ENCODE measurements at regions of chr20 and their contacts with region 1.

Region 1: DNA sequence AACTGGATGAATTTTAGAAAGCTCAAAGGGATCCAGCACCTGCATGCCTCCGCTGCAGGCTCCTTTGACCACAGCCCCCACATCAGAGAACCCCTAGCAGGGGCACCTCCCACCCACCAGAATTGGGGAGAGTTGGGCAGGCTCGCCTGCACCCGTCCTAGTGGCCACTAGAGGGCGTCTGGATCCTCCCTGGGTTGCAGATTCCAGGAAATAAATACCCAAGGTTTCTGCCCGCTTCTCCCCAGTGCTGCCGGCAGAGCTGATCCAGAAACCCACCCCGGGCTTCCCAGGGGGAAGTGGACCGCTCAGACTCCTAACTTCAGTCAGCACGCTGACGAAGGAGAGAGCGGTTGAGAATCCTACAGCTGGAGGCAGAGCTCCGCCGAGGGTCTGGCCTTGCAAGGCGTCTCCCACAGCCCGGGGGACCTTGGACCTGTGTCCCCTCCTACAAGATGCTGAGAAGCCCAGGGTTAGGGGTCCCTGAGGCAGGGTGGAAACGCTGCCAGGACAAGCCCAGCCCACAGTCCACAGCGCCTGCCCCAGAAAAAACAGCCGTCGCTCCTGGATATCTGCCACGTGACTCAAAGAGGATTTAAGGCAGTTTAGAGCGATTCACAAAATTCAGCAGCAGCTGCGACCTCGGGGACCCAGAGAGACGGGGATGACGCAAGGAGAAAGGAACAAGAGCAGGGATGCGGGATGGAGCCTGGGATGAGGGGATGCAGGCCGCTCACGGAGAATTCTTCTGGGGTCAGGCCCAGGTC is 32.6 kb upstream of the PHACTR3 start:
- DNase-seq: peak; percentile 72 to 85 (median 81)
- H3K4me3 ChIP-seq: peak overlapping the region; percentile 26
- H3K27ac ChIP-seq: peak overlapping the region; percentile 60 to 79
- H3K4me1 ChIP-seq: peaks cover 12% of the 10 kb centered on the region
- H3K27me3 ChIP-seq: no peaks in the 10 kb centered on the region
- CTCF ChIP-seq: peak; percentile 81 to 94 (median 82)
- EP300 ChIP-seq: no peak
- POLR2A ChIP-seq: no peak

Region 2: GRCh38 chr20:59751056-59751688 is 179.4 kb after region 1 on chr20:
- intact Hi-C with region 1: loop called (anchors 1 to 10 kb)
- DNase-seq: peak; percentile 44 to 80 (median 70)
- H3K4me3 ChIP-seq: no peak overlapping the region
- H3K27ac ChIP-seq: no peak overlapping the region
- H3K4me1 ChIP-seq: peaks cover 5% of the 10 kb centered on the region
- H3K27me3 ChIP-seq: no peaks in the 10 kb centered on the region
- CTCF ChIP-seq: peak in 2 of 3 donors; percentile 44 to 71
- EP300 ChIP-seq: no peak
- POLR2A ChIP-seq: no peak

Region 3: GRCh38 chr20:59848182-59848581 is 276.4 kb after region 1 on chr20:
- intact Hi-C with region 1: loop called in 1 of 4 experiments (anchors 10 kb)
- DNase-seq: no peak
- H3K4me3 ChIP-seq: no peak overlapping the region
- H3K27ac ChIP-seq: no peak overlapping the region
- H3K4me1 ChIP-seq: no peaks in the 10 kb centered on the region
- H3K27me3 ChIP-seq: no peaks in the 10 kb centered on the region
- CTCF ChIP-seq: no peak
- EP300 ChIP-seq: no peak
- POLR2A ChIP-seq: no peak

Region 4: DNA sequence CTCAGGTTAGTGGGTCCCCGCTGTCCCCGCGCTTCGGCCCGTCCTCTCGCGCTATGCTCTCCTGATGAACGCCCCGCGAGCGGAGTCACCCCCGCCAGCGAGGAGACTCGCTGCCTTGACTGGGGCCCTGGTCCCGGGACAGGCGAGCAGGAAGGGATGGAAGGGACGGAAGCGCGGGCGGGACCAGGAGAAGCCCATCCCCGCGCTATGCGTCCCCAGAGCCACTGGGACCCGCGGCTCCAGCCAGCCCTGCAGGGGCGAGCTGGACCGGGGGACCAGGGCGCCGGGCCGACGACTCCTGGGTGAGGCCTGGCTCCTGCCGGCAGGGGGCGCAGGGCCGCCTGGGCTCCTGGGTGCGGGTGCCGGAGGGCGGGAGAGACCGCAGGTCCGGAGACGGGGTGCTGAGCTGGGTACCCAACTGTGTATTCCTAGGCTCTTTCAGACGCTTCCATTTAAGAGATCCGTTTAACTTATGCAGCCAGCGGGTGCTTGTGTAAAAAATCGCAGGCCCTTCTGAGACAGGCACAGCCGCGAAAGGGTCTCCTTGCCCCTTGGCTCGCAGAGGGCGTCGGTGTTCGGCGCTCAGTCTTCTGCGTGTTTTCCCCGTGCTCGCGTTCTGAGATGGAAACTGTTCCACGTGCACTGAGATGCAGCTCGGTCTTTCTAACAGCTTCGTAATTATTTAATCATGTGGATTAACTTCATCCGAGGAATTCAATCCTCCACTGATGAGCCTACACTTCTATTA is 362.3 kb after region 1 on chr20:
- intact Hi-C with region 1: loop called in 1 of 4 experiments (anchors 10 kb)
- DNase-seq: peak; percentile 64 to 85 (median 78)
- H3K4me3 ChIP-seq: peak overlapping the region; percentile 57
- H3K27ac ChIP-seq: peak overlapping the region; percentile 53 to 55
- H3K4me1 ChIP-seq: peaks cover 13% of the 10 kb centered on the region
- H3K27me3 ChIP-seq: no peaks in the 10 kb centered on the region
- CTCF ChIP-seq: peak; percentile 74 to 93 (median 90)
- EP300 ChIP-seq: no peak
- POLR2A ChIP-seq: no peak

Region 5: DNA sequence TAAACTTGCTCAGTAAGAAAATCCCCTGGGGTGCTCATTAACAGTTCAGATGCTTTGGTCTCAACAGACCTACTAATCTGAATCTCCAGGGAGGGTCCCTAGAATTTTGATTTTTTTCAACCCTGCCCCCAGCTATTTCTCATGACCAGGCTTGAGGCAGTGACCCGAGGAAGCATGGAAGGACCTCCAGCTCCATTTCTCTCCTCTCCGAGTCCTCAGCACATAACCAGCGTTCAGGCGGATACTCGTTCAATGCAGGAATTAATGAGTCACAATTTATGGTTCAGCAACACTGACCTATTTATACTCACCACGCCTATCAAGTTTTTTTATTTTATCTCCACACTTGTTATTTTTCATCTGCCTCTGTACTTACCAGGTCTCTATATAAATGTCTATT is 1311.1 kb after region 1 on chr20:
- intact Hi-C with region 1: loop called in 1 of 4 experiments (anchors 5 kb)
- DNase-seq: no peak
- H3K4me3 ChIP-seq: no peak overlapping the region
- H3K27ac ChIP-seq: no peak overlapping the region
- H3K4me1 ChIP-seq: no peaks in the 10 kb centered on the region
- H3K27me3 ChIP-seq: no peaks in the 10 kb centered on the region
- CTCF ChIP-seq: no peak
- EP300 ChIP-seq: no peak
- POLR2A ChIP-seq: no peak

Measured in ovary (tissue), 10 donors.